Vagina (tissue), 2 donors: ENCODE measurements at regions of chr6 and their contacts with region 1.

Region 1: GRCh38 chr6:166097915-166098522 is 69.6 kb downstream of the TBXT start:
- DNase-seq: no peak
- H3K4me3 ChIP-seq: peak overlapping the region in 1 of 2 donors; percentile 16
- H3K27ac ChIP-seq: no peak overlapping the region
- H3K4me1 ChIP-seq: no peaks in the 10 kb centered on the region
- H3K27me3 ChIP-seq: no peaks in the 10 kb centered on the region
- CTCF ChIP-seq: peak; percentile 14 to 59 (median 46)
- POLR2A ChIP-seq: no peak

Region 2: DNA sequence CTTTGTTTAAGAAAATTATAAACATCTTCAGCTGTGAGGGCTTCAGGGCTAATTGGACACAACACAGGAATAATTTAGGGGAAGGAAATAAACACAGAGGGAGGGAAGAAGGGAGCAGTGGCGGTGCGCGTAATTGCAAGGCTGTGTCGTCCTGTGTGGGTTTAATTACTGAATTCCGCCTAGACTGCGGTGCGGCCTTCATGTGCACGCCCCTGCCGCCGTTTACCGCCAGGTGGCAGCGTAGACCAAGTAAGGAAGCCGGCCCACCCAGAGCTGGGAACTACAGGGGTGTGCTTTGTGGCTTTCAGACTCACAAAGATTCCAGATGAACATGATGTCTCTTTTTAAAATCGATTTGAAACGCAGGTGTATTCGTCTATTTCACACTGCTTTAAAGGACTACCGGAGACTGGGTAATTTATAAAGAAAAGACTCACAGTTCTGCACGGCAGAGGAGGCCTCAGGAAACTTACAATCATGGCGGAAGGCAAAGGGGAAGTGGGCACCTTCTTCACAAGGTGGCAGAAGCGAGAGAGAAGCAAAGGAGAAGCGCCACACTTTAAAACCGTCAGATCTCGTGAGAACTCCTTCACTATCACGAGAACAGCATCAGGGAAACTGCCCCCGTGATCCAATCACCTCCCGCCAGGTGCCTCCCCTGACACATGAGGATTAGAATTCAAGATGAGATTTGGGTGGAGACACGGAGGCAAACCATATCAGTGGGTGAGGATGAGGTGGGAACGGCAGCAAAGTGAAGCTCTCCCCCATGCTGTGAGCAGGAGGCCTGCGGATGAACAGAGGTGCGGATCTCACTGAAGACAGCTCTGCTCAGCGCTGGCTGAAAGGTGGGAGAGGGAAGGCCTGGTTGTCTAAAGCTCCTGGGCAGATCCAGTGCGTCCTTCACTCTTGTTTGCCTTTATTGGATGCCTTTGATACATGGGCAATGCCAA is 212.9 kb before region 1 on chr6:
- intact Hi-C with region 1: loop called (anchors 5 kb)
- DNase-seq: peak in 1 of 2 donors; percentile 77
- H3K4me3 ChIP-seq: no peak overlapping the region
- H3K27ac ChIP-seq: no peak overlapping the region
- H3K4me1 ChIP-seq: no peaks in the 10 kb centered on the region
- H3K27me3 ChIP-seq: no peaks in the 10 kb centered on the region
- CTCF ChIP-seq: peak; percentile 52 to 85 (median 77)
- POLR2A ChIP-seq: no peak

Region 3: GRCh38 chr6:166435574-166435973 is 337.6 kb after region 1 on chr6:
- intact Hi-C with region 1: no loop called
- DNase-seq: no peak
- H3K4me3 ChIP-seq: no peak overlapping the region
- H3K27ac ChIP-seq: no peak overlapping the region
- H3K4me1 ChIP-seq: peaks cover 4% of the 10 kb centered on the region
- H3K27me3 ChIP-seq: no peaks in the 10 kb centered on the region
- CTCF ChIP-seq: no peak
- POLR2A ChIP-seq: no peak